Posterior vena cava (tissue), 2 donors: ENCODE measurements at regions of chr12 and their contacts with region 1.

Region 1: GRCh38 chr12:47779301-47779942 is 6.4 kb downstream of the SLC48A1 start:
- DNase-seq: peak; percentile 97

Region 2: DNA sequence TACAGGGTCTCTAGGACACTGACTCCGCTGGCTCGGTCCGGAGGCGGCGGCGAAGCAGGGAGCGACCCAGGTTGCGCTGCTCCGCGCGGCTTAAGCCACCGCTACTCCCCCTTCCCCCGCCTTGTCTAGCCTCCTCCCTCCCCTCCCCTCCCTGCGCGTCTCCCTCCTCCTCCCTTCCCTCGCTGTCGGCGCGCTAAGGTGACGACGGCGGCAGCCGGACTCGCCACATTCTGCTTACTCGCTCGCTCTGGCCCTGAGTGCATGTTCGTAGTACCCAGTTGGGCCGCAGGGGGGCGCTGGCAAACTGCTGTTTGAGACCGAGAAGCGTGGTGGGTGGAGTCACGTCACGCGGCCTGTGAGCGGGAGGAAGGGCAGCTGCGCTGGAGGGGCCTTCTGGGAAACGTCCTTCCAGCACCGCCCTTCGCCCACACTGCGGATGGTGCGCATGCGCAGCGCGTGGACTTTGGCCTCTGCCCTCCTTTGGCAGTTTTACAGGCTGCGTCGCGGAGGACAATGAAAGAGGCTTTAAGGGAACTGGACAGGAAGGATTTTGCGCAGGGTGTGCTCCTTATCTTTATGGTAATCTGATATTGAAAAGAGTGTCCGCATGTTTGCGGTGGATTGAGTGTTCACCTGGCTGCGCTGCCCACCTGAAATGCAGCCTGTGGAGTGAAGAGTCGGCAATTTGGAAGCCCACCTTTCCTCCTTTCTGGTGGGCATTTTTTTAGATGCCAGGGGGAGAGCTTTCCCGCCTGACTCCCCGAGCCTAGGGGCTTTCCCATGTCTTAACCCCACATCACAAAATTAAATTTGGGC is 1788.7 kb before region 1 on chr12 and contains the start of gene SCAF11:
- intact Hi-C with region 1: loop called in 1 of 2 experiments (anchors 5 kb)
- DNase-seq: peak; percentile 100
- total RNA-seq, gene SCAF11: 105 to 114 TPM

Region 3: DNA sequence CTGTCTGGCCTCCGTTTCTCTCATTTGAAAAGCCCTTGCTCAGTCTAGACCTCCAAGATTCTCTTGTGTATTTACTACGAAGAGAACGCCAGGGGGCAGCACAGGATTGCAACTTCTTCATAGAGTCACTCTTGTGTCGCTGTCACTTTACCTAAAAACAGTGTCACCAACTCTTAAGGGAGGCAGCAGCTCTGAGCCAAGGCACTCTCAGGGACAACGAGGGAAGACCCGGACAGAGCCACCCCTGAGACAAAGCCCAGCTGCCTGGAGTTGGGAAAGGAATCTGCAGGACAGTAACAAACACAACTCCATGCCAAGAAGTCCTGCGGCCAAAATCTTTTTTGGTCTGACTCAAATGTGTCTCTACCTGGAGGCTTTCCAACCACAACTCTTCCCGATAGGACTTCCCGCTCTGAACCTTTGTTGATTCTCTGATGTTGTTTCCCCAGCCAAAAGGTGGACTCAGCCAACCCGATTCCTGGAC is 64.0 kb before region 1 on chr12:
- intact Hi-C with region 1: loop called (anchors 1 to 5 kb)
- DNase-seq: peak; percentile 90

Region 4: GRCh38 chr12:47742253-47742825 is 37.1 kb before region 1 on chr12:
- intact Hi-C with region 1: loop called in 1 of 2 experiments (anchors 5 kb)
- DNase-seq: no peak

Region 5: GRCh38 chr12:47837190-47838171 is 58.1 kb after region 1 on chr12:
- intact Hi-C with region 1: loop called in 1 of 2 experiments (anchors 10 kb)
- DNase-seq: peak; percentile 88

Region 6: DNA sequence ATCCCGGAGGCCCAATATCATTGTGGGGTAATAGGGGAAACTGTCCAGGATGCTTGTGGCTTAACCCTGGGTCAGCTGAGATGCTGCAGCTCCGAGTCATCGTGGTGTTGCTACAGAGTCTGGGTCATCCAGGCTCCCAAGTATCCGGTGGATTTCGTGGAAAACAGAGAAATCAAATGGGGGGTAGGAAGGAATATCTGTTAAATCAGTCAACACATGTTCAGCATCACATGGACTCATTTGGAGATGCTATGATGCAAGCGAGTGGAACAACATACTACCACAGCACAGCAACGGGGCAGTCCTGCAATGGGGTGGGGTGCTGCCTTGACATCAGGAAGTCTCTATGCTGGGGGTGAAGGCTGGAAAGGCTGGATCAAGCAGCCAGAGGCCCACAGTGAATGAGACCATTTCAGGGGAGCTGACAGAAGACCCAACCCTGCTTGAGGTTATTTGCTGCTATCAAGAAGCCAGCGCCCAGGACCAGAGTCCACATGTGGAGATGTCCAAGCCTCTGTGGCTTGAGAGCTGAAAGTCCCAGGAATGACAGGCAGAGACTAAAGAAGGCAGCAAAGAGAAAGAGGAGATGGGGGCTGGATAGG is 102.5 kb after region 1 on chr12:
- intact Hi-C with region 1: no loop called
- DNase-seq: peak; percentile 90

Region 7: GRCh38 chr12:49623142-49623904 is 1843.9 kb after region 1 on chr12 and contains the start of gene PRPF40B:
- intact Hi-C with region 1: no loop called
- DNase-seq: peak; percentile 96
- total RNA-seq, gene PRPF40B: 16.2 to 20.7 TPM